B cell (primary cell): ENCODE measurements at regions of chr2 and their contacts with region 1.

Region 1: GRCh38 chr2:131492418-131493198 is 411 bp upstream of the MZT2A start:
- DNase-seq: peak; percentile 98
- ATAC-seq: peak; percentile 84
- H3K4me3 ChIP-seq: peak overlapping the region; percentile 25 to 98 (median 84)
- H3K4me3 Mint-ChIP-seq: peak overlapping the region; percentile 94
- H3K27ac ChIP-seq: peak overlapping the region; percentile 80 to 94
- H3K27ac Mint-ChIP-seq: peak overlapping the region; percentile 97
- H3K4me1 ChIP-seq: peaks cover 24 to 29% of the 10 kb centered on the region in 2 donors
- H3K4me1 Mint-ChIP-seq: peaks cover 29% of the 10 kb centered on the region
- H3K27me3 ChIP-seq: no peaks in the 10 kb centered on the region
- H3K27me3 Mint-ChIP-seq: no peaks in the 10 kb centered on the region
- CTCF ChIP-seq: peak; percentile 87

Region 2: GRCh38 chr2:130372055-130372832 is 1120.4 kb before region 1 on chr2:
- CTCF ChIA-PET with region 1: no interaction called
- POLR2A ChIA-PET with region 1: no interaction called
- intact Hi-C with region 1: loop called (anchors 5 kb)
- DNase-seq: peak; percentile 89
- ATAC-seq: peak; percentile 82
- H3K4me3 ChIP-seq: peak overlapping the region; percentile 66 to 82 (median 75)
- H3K4me3 Mint-ChIP-seq: peak overlapping the region; percentile 99
- H3K27ac ChIP-seq: peak overlapping the region; percentile 48 to 76
- H3K27ac Mint-ChIP-seq: peak overlapping the region; percentile 99
- H3K4me1 ChIP-seq: peaks cover 32 to 62% of the 10 kb centered on the region in 2 donors
- H3K4me1 Mint-ChIP-seq: peaks cover 65% of the 10 kb centered on the region
- H3K27me3 ChIP-seq: no peaks in the 10 kb centered on the region
- H3K27me3 Mint-ChIP-seq: no peaks in the 10 kb centered on the region
- CTCF ChIP-seq: peak; percentile 81

Region 3: DNA sequence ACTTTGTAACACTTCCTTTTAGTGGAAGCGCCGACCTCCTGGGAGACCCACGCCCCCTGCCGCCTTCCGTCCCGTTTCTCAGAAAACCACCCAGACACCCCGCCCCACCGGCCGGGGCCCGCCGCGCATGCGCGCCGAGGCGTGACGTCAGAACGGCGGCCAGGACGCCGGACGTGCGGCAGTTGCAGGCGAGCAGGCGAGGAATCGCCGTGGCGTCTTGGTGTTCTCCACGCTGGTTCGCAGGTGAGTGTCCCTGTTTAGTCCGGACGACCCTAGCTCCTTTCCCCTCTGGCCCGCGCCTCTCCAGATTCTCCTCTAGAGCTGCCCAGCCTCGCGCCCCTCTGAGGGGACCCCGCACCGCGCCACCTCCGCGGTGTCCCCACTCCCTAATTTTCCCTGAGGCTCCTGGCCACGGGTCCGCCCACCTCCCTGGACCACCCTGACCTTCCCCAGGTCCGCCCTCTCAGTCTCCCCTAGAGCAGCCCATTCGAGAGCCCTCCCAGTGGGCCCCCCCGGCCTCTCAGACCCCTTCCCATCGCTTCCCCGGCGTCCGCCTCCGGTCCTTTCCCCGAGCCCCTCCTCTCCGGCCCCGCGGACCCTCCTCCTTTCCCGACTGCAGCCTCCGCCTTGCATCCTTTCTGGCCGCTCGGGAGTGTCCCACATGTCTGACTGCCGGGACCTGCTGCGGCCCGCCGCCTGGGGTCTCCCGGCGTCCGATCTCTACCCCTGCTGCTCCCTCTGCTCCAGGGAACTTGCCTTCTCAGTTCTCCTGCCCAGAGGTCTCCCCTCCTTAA is 387.3 kb before region 1 on chr2 and contains the start of gene PLEKHB2:
- CTCF ChIA-PET with region 1: no interaction called
- POLR2A ChIA-PET with region 1: no interaction called
- intact Hi-C with region 1: loop called (anchors 2 kb)
- DNase-seq: peak; percentile 95
- ATAC-seq: peak; percentile 88
- H3K4me3 ChIP-seq: peak within 1 kb of the TSS; percentile 47 to 99 (median 91)
- H3K4me3 Mint-ChIP-seq: peak within 1 kb of the TSS; percentile 97
- H3K27ac ChIP-seq: peak within 1 kb of the TSS; percentile 80 to 91
- H3K27ac Mint-ChIP-seq: peak within 1 kb of the TSS; percentile 93
- H3K4me1 ChIP-seq: peaks cover 19 to 20% of the 10 kb centered on the region in 2 donors
- H3K4me1 Mint-ChIP-seq: peaks cover 44% of the 10 kb centered on the region
- H3K27me3 ChIP-seq: no peaks in the 10 kb centered on the region
- H3K27me3 Mint-ChIP-seq: no peaks in the 10 kb centered on the region
- CTCF ChIP-seq: no peak
- total RNA-seq, gene PLEKHB2: 39.5 and 42.1 TPM in 2 replicates

Region 4: GRCh38 chr2:131475831-131476230 is 16.8 kb before region 1 on chr2 and contains the start of gene TUBA3D:
- CTCF ChIA-PET with region 1: no interaction called
- POLR2A ChIA-PET with region 1: no interaction called
- intact Hi-C with region 1: no loop called
- DNase-seq: no peak
- ATAC-seq: no peak
- H3K4me3 ChIP-seq: no peak within 1 kb of the TSS
- H3K4me3 Mint-ChIP-seq: no peak within 1 kb of the TSS
- H3K27ac ChIP-seq: no peak within 1 kb of the TSS
- H3K27ac Mint-ChIP-seq: no peak within 1 kb of the TSS
- H3K4me1 ChIP-seq: no peaks in the 10 kb centered on the region
- H3K4me1 Mint-ChIP-seq: no peaks in the 10 kb centered on the region
- H3K27me3 ChIP-seq: no peaks in the 10 kb centered on the region
- H3K27me3 Mint-ChIP-seq: no peaks in the 10 kb centered on the region
- CTCF ChIP-seq: no peak
- total RNA-seq, gene TUBA3D: not detected in 2 replicates

Region 5: GRCh38 chr2:131552871-131553270 is 60.3 kb after region 1 on chr2:
- CTCF ChIA-PET with region 1: no interaction called
- POLR2A ChIA-PET with region 1: no interaction called
- intact Hi-C with region 1: no loop called
- DNase-seq: no peak
- ATAC-seq: no peak
- H3K4me3 ChIP-seq: no peak overlapping the region
- H3K4me3 Mint-ChIP-seq: no peak overlapping the region
- H3K27ac ChIP-seq: no peak overlapping the region
- H3K27ac Mint-ChIP-seq: no peak overlapping the region
- H3K4me1 ChIP-seq: no peaks in the 10 kb centered on the region
- H3K4me1 Mint-ChIP-seq: no peaks in the 10 kb centered on the region
- H3K27me3 ChIP-seq: peaks cover 0 to 5% (median 0%) of the 10 kb centered on the region in 4 experiments
- H3K27me3 Mint-ChIP-seq: peaks cover 36% of the 10 kb centered on the region
- CTCF ChIP-seq: no peak

Region 6: GRCh38 chr2:131673392-131674173 is 181.0 kb after region 1 on chr2:
- CTCF ChIA-PET with region 1: interaction called, 28 read pairs
- POLR2A ChIA-PET with region 1: no interaction called
- intact Hi-C with region 1: no loop called
- DNase-seq: peak; percentile 71
- ATAC-seq: peak; percentile 67
- H3K4me3 ChIP-seq: peak overlapping the region in 3 of 5 experiments; percentile 30 to 63 (median 48)
- H3K4me3 Mint-ChIP-seq: peak overlapping the region; percentile 73
- H3K27ac ChIP-seq: no peak overlapping the region
- H3K27ac Mint-ChIP-seq: no peak overlapping the region
- H3K4me1 ChIP-seq: peaks cover 20 to 24% of the 10 kb centered on the region in 2 donors
- H3K4me1 Mint-ChIP-seq: peaks cover 20% of the 10 kb centered on the region
- H3K27me3 ChIP-seq: peaks cover 0 to 33% (median 20%) of the 10 kb centered on the region in 4 experiments
- H3K27me3 Mint-ChIP-seq: peaks cover 16% of the 10 kb centered on the region
- CTCF ChIP-seq: peak; percentile 86